Natural killer cell (primary cell): ENCODE measurements at regions of chr1 and their contacts with region 1.

Region 1: GRCh38 chr1:155227261-155228095 is 19.0 kb downstream of the MTX1 start:
- DNase-seq: peak; percentile 95 to 98
- ATAC-seq: peak; percentile 94 to 99 (median 95)
- H3K4me3 ChIP-seq: peak overlapping the region; percentile 79
- H3K4me3 Mint-ChIP-seq: peak overlapping the region; percentile 86
- H3K27ac ChIP-seq: peak overlapping the region; percentile 86
- H3K27ac Mint-ChIP-seq: peak overlapping the region; percentile 85 to 96
- H3K4me1 ChIP-seq: peaks cover 26% of the 10 kb centered on the region
- H3K4me1 Mint-ChIP-seq: peaks cover 12 to 17% of the 10 kb centered on the region in 2 donors
- H3K27me3 ChIP-seq: no peaks in the 10 kb centered on the region
- H3K27me3 Mint-ChIP-seq: no peaks in the 10 kb centered on the region
- CTCF ChIP-seq: no peak

Region 2: GRCh38 chr1:154669464-154670282 is 557.8 kb before region 1 on chr1:
- intact Hi-C with region 1: no loop called
- DNase-seq: peak; percentile 26 to 87
- ATAC-seq: peak; percentile 76 to 85 (median 80)
- H3K4me3 ChIP-seq: no peak overlapping the region
- H3K4me3 Mint-ChIP-seq: no peak overlapping the region
- H3K27ac ChIP-seq: no peak overlapping the region
- H3K27ac Mint-ChIP-seq: no peak overlapping the region
- H3K4me1 ChIP-seq: no peaks in the 10 kb centered on the region
- H3K4me1 Mint-ChIP-seq: no peaks in the 10 kb centered on the region
- H3K27me3 ChIP-seq: no peaks in the 10 kb centered on the region
- H3K27me3 Mint-ChIP-seq: peaks cover 3 to 10% of the 10 kb centered on the region in 2 donors
- CTCF ChIP-seq: peak; percentile 23

Region 3: DNA sequence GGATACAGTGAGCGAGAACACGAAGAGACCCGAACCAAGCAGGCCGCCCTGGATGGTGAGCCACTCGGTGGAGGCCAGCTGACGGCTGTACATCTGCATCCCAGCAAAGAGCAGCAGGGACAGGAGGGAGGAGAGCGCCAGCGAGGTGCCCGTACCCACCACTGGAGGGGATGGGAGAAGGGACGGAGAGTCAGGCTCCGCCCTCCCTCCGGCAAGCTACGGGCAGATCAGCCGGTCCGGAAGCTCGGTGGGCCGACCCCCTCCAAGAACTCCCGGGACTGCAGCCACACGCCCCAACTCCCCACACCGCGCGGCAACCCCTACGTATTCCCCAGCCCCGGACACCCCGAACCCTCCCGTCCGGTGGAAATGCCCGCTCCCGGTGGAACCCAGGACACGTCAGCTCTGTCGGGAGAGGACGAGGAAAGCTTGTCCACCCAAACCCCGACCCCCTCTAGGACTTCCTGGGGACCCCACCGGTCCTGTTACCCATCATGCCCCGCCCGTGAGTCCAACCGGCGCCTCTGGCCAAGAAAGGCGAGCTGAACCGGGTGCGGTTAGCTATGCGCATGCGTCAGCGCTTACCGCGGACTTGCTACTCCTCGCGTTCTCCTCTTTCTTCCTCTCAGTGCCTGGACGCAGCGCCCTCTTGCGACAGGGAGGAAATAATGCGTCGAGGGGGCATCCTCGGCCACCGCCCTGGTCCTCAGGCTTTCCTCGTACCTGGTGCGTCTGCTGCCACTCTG is 54.6 kb before region 1 on chr1 and contains the start of gene KRTCAP2:
- intact Hi-C with region 1: loop called (anchors 5 kb)
- DNase-seq: peak; percentile 89 to 98
- ATAC-seq: peak; percentile 82 to 93 (median 85)
- H3K4me3 ChIP-seq: peak within 1 kb of the TSS; percentile 68
- H3K4me3 Mint-ChIP-seq: peak within 1 kb of the TSS; percentile 95
- H3K27ac ChIP-seq: peak within 1 kb of the TSS; percentile 89
- H3K27ac Mint-ChIP-seq: peak within 1 kb of the TSS; percentile 95 to 99
- H3K4me1 ChIP-seq: peaks cover 34% of the 10 kb centered on the region
- H3K4me1 Mint-ChIP-seq: peaks cover 28 to 41% of the 10 kb centered on the region in 2 donors
- H3K27me3 ChIP-seq: no peaks in the 10 kb centered on the region
- H3K27me3 Mint-ChIP-seq: peaks cover 0 to 5% of the 10 kb centered on the region in 2 donors
- CTCF ChIP-seq: peak; percentile 94
- total RNA-seq, gene KRTCAP2: 95.3 to 113 (median 104) TPM

Region 4: GRCh38 chr1:155193275-155193990 is 34.0 kb before region 1 on chr1:
- intact Hi-C with region 1: loop called (anchors 5 kb)
- DNase-seq: peak; percentile 75 to 80
- ATAC-seq: peak; percentile 46 to 81 (median 60)
- H3K4me3 ChIP-seq: peak overlapping the region; percentile 27
- H3K4me3 Mint-ChIP-seq: peak overlapping the region; percentile 90
- H3K27ac ChIP-seq: no peak overlapping the region
- H3K27ac Mint-ChIP-seq: peak overlapping the region; percentile 82 to 97
- H3K4me1 ChIP-seq: peaks cover 30% of the 10 kb centered on the region
- H3K4me1 Mint-ChIP-seq: peaks cover 15 to 33% of the 10 kb centered on the region in 2 donors
- H3K27me3 ChIP-seq: no peaks in the 10 kb centered on the region
- H3K27me3 Mint-ChIP-seq: peaks cover 0 to 16% of the 10 kb centered on the region in 2 donors
- CTCF ChIP-seq: peak; percentile 97

Region 5: DNA sequence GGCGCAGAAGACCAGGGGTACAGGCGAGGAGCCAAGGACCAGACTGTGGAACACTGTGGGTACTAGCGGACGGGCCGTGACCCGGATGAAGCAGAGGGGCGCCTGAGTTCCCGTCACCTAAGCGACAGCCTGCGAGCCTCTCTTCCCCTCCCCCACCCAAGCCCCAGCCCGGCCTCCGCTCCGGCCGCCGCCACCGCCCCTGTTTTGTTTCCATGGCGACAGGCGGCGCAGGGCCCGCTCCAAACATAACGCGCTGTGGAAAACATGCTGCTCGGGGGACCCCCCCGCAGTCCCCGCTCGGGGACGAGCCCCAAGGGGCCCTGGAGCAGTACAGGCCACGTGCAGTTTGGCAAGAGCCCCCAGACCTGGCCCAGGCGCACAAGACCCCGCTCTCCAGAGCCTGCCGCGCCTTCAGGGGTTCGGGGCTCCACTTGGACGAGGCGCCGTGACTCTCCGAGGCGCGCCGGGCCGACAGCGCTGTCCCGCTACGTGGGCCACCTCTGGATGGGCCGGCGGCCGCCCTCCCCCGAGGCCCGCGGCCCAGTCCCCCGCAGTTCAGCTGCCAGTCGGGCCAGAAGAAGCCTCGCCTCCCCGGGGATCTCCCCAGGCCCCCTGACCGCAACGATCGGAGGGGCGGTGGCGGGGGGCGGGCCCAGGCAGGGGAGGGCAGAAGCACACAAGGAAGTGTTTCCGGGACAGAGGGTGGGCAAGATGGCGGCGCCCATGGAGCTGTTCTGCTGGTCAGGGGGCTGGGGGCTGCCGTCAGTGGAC is 18.8 kb before region 1 on chr1 and contains the start of gene MTX1:
- intact Hi-C with region 1: loop called (anchors 1 kb)
- DNase-seq: peak; percentile 88 to 93
- ATAC-seq: peak; percentile 80 to 94 (median 86)
- H3K4me3 ChIP-seq: peak within 1 kb of the TSS; percentile 81
- H3K4me3 Mint-ChIP-seq: peak within 1 kb of the TSS; percentile 94
- H3K27ac ChIP-seq: peak within 1 kb of the TSS; percentile 100
- H3K27ac Mint-ChIP-seq: peak within 1 kb of the TSS; percentile 92 to 96
- H3K4me1 ChIP-seq: peaks cover 26% of the 10 kb centered on the region
- H3K4me1 Mint-ChIP-seq: peaks cover 25 to 33% of the 10 kb centered on the region in 2 donors
- H3K27me3 ChIP-seq: no peaks in the 10 kb centered on the region
- H3K27me3 Mint-ChIP-seq: no peaks in the 10 kb centered on the region
- CTCF ChIP-seq: no peak
- total RNA-seq, gene MTX1: 22.3 to 28.5 (median 27.9) TPM